PC-9 (cell line): ENCODE measurements at regions of chr21 and their contacts with region 1.

Region 1: DNA sequence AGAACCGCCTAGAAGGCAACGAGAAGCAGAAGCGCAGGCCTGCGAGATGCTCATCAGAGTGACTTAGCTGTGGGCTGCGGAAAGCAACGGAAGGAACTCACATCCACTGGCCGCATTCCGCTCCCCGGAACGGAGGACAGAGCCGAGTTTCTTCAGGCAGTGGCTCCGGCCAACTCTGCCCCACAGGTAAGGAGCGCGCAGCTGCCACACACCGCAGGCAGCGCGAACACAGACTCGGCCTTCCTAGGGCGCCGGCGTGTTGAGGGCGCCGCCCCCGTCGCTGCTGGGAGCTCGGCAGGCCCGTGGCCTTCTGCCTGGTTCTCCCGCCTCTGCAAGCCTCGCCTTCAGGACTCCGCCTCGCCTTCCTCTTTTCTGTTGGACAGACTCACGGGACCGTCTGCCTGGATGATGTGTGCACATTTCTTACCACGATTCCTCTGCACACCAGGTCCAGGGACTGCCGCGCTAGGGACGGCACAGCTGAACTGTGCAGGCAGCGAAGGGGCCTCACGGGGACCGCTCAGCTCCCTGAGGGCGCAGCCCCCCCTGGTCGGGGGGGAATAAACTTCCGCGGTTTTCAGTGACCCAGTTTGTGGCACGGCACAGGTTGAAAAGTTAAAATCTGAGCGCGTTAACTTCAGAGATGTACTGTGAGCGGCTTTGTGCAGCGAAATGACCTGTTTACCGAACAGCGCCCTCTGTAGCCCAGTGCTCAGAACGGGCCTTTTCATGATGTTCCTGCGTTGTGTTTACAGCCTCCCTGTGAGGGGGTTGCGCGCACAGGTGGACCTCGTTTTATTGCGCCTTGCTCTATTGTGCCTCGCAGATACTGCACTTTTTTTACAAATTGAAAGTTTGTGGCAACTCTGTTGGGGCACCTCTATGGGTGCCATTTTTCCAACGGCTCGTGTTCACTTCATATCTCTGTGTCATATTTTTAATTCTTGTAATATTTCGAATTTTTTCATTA is 15.8 kb downstream of the TCP10L start:
- DNase-seq: peak; percentile 62 to 68
- H3K4me3 ChIP-seq: peak overlapping the region; percentile 59
- H3K27ac ChIP-seq: no peak overlapping the region
- H3K4me1 ChIP-seq: peaks cover 6% of the 10 kb centered on the region
- H3K27me3 ChIP-seq: no peaks in the 10 kb centered on the region
- CTCF ChIP-seq: peak; percentile 78

Region 2: GRCh38 chr21:32253215-32253641 is 316.3 kb before region 1 on chr21:
- CTCF ChIA-PET with region 1: no interaction called
- POLR2A ChIA-PET with region 1: no interaction called
- intact Hi-C with region 1: no loop called
- DNase-seq: no peak
- H3K4me3 ChIP-seq: no peak overlapping the region
- H3K27ac ChIP-seq: no peak overlapping the region
- H3K4me1 ChIP-seq: no peaks in the 10 kb centered on the region
- H3K27me3 ChIP-seq: peaks cover 38% of the 10 kb centered on the region; the same call in 1 of the 2 replicates
- CTCF ChIP-seq: no peak

Region 3: GRCh38 chr21:32403201-32403777 is 166.3 kb before region 1 on chr21:
- CTCF ChIA-PET with region 1: no interaction called
- POLR2A ChIA-PET with region 1: no interaction called
- intact Hi-C with region 1: loop called (anchors 2 kb)
- DNase-seq: peak in 1 of 2 experiments; percentile 36
- H3K4me3 ChIP-seq: no peak overlapping the region
- H3K27ac ChIP-seq: no peak overlapping the region
- H3K4me1 ChIP-seq: no peaks in the 10 kb centered on the region
- H3K27me3 ChIP-seq: no peaks in the 10 kb centered on the region
- CTCF ChIP-seq: peak; percentile 65

Region 4: DNA sequence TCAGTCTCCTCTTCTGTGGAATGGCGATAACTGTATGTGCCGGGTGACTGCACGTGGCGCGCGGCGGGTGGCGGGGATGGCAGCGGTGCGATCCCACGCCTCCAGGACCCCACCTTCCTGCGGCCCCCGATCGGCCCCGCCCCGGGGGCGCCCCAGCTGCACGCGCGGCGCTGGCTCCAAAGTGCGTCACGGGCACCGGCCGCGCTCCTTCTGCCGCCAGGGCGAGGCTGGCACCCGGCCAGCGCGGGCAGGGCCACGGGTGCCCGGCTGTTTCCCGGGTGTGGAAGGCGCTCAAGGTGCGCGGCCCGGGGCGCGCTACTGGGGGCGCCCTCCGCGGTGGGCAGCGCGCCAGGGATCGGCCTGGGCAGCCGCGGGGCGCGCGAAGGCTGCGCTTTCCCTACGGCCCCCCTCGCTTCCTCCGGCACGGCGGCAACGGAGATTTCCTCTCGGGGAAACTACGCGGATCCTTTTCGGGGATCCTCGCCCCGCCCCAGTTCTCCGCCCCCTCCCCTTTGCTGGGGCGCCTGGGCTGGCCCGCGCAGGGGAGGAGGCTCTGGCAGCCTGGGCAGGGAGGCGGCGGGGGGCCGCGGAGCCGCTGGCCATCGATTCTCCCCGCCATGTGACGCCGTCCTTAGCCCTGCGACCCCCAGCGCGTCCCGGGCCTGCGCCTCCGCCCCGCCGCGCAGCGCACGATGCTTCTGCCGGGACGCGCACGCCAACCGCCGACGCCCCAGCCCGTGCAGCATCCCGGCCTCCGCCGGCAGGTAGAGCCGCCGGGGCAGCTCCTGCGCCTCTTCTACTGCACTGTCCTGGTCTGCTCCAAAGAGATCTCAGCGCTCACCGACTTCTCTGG is 157.2 kb before region 1 on chr21 and contains the start of gene EVA1C:
- CTCF ChIA-PET with region 1: no interaction called
- POLR2A ChIA-PET with region 1: interaction called, 3 read pairs
- intact Hi-C with region 1: loop called (anchors 2 kb)
- DNase-seq: peak in 1 of 2 experiments; percentile 45
- H3K4me3 ChIP-seq: peak within 1 kb of the TSS; percentile 51
- H3K27ac ChIP-seq: no peak within 1 kb of the TSS
- H3K4me1 ChIP-seq: no peaks in the 10 kb centered on the region; the same call in 1 of the 2 replicates
- H3K27me3 ChIP-seq: peaks cover 32% of the 10 kb centered on the region; the same call in 1 of the 2 replicates
- CTCF ChIP-seq: no peak
- total RNA-seq, gene EVA1C: 3.0 and 3.1 TPM in 2 replicates